ENCODE measurements at regions of chr4 and their contacts with region 1.

Region 1: DNA sequence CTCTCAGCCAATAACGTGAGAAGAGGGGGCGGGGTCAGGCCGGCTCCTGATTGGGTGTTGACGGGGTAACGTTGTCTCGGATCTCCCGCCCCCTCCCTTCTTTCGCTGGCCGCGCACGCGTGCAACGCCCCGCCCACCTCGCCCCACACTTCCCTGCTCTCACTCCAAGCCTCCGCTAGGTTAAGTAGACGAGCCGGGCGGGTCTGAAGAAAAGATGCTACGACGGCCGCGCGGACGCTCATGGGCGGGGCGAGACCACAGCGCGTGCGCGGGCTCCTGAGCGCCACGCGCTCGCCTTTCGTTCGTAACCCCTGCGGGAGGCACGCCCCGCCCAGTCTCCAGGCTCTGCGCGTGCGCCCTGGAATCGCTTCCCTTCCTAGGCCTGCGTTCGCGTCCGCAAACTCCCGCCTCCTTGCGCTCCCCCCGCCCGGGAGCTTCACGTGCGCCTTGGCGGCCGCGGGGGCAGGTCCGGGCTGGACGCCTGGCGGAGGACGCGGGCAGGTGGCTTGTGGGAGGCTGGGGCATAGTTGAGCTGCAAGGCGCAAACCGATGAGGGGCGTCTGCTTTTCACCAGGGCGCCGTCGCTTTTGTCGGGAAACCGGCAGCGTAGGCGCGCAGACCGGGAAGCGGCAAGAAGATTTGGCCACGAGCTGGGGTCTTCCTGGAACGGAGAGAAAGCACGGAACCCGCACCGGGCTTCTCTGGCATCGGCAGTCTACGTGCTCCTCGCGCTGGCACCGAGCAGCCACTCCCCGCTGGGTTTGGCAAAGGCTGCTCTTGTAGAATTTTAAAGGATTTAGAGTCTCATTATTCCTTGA is 467 bp upstream of the PGRMC2 start:
- DNase-seq: peak; percentile 99 to 100
- H3K4me3 ChIP-seq: peak overlapping the region; percentile 91 to 93
- H3K27ac ChIP-seq: peak overlapping the region; percentile 92 to 93
- H3K4me1 ChIP-seq: peaks cover 0 to 11% of the 10 kb centered on the region in 2 donors
- H3K27me3 ChIP-seq: no peaks in the 10 kb centered on the region
- CTCF ChIP-seq: peak in 2 of 3 experiments; percentile 34 to 48

Region 2: DNA sequence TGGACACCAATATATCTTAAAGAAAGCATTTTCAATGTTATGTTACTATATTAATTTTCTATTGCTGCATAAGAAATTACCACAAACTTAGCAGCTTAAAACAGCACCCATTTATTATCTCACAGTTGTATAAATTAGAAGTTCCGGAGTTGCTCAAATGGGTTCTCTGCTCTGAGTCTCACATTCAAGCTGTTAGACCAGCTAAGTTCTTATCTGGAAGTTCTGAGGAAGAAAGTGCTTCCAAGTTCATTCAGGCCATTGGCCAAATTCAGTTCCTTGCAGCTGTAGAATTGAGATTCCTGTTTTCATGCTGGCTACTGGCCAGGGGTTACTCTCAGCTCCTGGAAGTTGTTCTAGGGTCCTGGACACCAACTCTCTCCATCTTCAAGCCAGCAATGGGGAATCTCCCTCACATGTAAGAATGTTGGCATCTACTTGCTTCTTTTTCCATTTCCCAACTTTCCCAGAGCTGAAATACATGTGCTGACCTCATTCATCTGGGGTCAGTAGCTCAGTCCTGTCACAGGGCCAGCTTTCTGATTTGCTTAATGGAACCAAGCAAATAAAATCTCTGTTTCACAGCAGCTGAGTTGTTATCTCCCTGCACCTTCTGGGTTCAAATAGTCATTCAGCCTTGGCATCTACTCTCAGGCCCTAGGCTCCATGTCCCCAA is 754.9 kb before region 1 on chr4:
- intact Hi-C with region 1: no loop called
- DNase-seq: peak in 1 of 2 donors; percentile 69
- H3K4me3 ChIP-seq: no peak overlapping the region
- H3K27ac ChIP-seq: no peak overlapping the region
- H3K4me1 ChIP-seq: peaks cover 0 to 2% of the 10 kb centered on the region in 2 donors
- H3K27me3 ChIP-seq: no peaks in the 10 kb centered on the region
- CTCF ChIP-seq: no peak

Region 3: DNA sequence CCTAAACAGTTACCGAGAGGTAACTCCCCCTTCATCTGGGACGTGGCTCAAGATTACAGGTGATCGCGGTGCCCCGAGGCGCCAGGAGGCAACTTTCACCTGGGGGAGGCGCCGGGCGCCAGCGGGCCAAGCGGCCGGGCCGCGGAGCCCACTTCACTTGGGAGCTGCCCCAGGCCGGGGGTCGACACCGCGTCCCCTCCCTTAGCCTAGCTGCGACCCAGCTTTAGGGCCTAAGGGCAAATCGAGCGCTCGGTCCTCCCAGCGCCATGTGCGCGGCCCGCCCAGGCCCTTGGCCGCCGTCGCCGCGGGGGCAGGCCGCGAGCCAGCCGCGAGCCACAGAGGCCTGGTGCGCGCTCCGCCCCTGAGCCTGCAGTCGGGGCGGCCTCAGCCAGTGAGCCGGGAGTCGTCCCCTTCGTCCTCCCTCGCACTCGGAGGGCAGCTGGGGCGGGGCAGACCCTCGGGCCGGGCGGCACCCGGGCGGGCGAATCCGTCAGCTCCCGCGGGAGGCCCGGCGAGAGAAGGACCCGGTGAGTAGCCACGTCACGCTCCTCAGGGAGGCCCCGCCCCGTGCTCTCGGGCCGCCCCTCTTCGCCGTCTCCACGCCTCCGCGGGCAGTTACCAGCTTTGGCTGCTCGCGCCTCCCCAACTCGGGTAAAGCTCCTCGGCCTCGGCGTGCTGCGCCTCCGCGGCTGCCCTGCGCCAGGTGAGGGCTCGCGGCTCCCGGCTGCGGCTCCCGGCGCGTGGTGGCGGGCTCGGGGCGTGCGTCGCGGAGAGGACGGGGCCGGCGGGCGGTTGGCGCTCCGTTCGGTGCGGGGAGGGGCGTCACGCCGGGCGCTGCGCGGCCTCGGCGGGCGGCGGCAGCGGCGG is 227.1 kb before region 1 on chr4 and contains the start of gene LARP1B:
- intact Hi-C with region 1: loop called (anchors 1 kb)
- DNase-seq: peak; percentile 85 to 97
- H3K4me3 ChIP-seq: peak within 1 kb of the TSS; percentile 62 to 81
- H3K27ac ChIP-seq: peak within 1 kb of the TSS; percentile 93 to 97
- H3K4me1 ChIP-seq: peaks cover 0 to 4% of the 10 kb centered on the region in 2 donors
- H3K27me3 ChIP-seq: no peaks in the 10 kb centered on the region
- CTCF ChIP-seq: no peak
- total RNA-seq, gene LARP1B: 8.6 TPM

Region 4: DNA sequence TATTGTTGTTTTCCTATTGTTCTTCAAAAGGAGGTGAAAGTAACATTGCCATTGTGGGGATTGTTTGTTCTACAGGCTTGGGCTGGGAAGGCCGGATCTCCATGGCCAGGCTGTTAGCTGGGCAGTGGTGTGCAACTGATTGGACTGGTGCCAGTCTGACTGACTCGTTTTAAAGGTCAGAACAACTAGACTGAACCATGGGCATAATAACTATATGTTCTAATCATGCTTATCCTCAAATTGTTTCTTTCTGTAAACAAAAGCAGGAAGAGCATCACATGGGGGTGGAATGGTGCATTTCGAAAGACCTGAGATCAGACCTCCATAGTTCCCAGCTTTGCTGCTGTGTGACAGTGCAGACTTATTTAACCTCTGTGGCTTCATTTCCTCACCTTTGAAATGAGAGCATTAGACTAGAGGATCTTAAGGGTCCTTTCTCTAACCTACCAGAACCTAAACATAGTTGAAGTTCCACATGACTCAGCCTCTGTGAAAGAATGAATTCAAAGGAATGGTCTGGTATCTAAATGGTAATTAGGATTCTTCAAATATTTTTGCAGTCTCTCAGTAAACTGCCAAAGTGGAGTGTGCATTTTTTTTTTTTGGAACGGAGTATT is 66.2 kb after region 1 on chr4:
- intact Hi-C with region 1: no loop called
- DNase-seq: no peak
- H3K4me3 ChIP-seq: no peak overlapping the region
- H3K27ac ChIP-seq: no peak overlapping the region
- H3K4me1 ChIP-seq: no peaks in the 10 kb centered on the region
- H3K27me3 ChIP-seq: no peaks in the 10 kb centered on the region
- CTCF ChIP-seq: no peak

Region 5: GRCh38 chr4:128386761-128387599 is 98.9 kb after region 1 on chr4:
- intact Hi-C with region 1: loop called (anchors 2 kb)
- DNase-seq: peak; percentile 63 to 95
- H3K4me3 ChIP-seq: peak overlapping the region in 1 of 2 donors; percentile 38
- H3K27ac ChIP-seq: peak overlapping the region; percentile 58 to 69
- H3K4me1 ChIP-seq: peaks cover 0 to 21% of the 10 kb centered on the region in 2 donors
- H3K27me3 ChIP-seq: no peaks in the 10 kb centered on the region
- CTCF ChIP-seq: no peak

Region 6: GRCh38 chr4:128468123-128468989 is 180.3 kb after region 1 on chr4:
- intact Hi-C with region 1: loop called (anchors 5 kb)
- DNase-seq: peak; percentile 33 to 85
- H3K4me3 ChIP-seq: peak overlapping the region; percentile 22 to 40
- H3K27ac ChIP-seq: peak overlapping the region; percentile 64 to 72
- H3K4me1 ChIP-seq: peaks cover 4 to 10% of the 10 kb centered on the region in 2 donors
- H3K27me3 ChIP-seq: no peaks in the 10 kb centered on the region
- CTCF ChIP-seq: no peak

Region 7: DNA sequence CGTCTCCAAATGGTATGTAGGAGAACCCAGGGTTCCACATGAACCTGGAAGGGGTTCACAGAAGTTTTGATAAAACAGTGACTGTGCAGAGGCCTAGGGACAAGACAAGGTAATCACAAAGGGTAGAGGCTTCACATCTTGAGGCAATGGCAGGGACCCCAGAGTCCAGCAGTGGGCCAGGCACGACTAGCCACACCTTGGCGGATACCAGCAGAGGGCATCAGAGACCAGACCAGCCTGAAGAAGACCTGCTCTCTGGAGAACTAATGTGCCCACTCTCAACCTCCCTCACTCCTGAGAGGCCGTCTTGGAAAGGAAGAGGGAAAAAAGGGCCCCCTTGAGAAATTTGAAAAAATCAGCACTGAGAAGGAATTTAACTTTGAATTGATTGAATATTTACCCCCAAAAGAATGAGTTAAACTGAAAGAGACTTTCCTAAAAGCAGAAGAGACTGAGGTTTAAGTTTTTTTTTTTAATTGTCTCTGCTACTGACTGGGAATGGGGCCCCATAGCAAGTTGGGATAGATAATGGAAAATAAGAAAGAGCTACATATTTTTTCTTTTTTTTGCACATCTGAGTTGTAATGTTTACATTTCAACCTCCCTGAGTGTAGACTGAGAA is 277.6 kb after region 1 on chr4:
- intact Hi-C with region 1: loop called (anchors 5 kb)
- DNase-seq: no peak
- H3K4me3 ChIP-seq: no peak overlapping the region
- H3K27ac ChIP-seq: no peak overlapping the region
- H3K4me1 ChIP-seq: no peaks in the 10 kb centered on the region
- H3K27me3 ChIP-seq: no peaks in the 10 kb centered on the region
- CTCF ChIP-seq: peak in 2 of 3 experiments; percentile 22 to 40

Region 8: DNA sequence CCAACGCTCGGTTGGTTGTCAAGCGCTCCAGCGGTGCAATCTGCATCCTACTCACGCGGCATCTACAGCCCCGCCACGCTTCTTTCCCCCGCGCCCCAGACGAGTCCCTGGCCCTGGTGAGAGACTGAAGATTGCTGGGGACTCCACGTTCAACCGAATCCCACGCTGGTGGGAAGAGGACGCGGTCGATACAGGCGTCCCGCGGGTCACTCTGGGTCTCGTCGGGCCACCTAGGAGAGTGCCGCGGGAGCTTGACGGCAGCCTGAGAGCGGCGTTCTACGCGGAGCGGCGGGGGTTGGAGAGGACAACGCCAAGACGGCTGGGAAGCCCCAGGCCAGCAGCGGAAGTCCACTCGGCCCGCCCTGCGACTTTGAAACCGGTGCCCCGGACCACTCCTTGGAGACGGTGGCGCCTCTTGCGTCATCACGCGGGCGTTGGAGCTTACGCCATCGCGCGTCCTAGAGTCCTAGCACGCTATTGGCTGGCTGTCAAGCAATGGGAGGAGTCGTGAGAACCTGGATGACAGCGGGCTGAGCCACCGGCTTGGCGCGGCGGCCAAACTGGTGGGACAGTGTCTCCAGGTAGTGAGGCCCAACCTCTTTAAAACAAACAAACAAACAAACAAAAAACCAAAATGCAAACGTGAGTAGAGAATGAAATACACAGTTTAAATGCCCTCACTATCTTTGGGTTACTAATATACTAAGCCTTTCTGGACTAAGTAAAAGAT is 805.3 kb after region 1 on chr4 and contains the start of gene SCLT1:
- intact Hi-C with region 1: loop called (anchors 5 kb)
- DNase-seq: peak; percentile 92 to 99
- H3K4me3 ChIP-seq: peak within 1 kb of the TSS; percentile 74 to 75
- H3K27ac ChIP-seq: peak within 1 kb of the TSS; percentile 91 to 92
- H3K4me1 ChIP-seq: peaks cover 0 to 14% of the 10 kb centered on the region in 2 donors
- H3K27me3 ChIP-seq: no peaks in the 10 kb centered on the region
- CTCF ChIP-seq: no peak
- total RNA-seq, gene SCLT1: 7.0 TPM

Measured in ascending aorta (tissue), 2 donors.